Activated T-helper 2 cell treated with anti-CD3 and anti-CD28 coated beads, Interferon-gamma antibody, Interleukin-2, Interleukin-4, amounts not matched to agents 10 μg/mL and 5 μg/mL and 100 μg/mL, durations not matched to agents 14 hours and 24 hours and 36 hours (primary cell): ENCODE measurements at regions of chr3 and their contacts with region 1.

Region 1: GRCh38 chr3:33096093-33096868 is 665 bp downstream of the GLB1 start:
- DNase-seq: peak; percentile 31
- H3K4me3 Mint-ChIP-seq: peak overlapping the region; percentile 98
- H3K27ac Mint-ChIP-seq: peak overlapping the region; percentile 84
- H3K4me1 Mint-ChIP-seq: peaks cover 33% of the 10 kb centered on the region
- H3K27me3 Mint-ChIP-seq: no peaks in the 10 kb centered on the region

Region 2: DNA sequence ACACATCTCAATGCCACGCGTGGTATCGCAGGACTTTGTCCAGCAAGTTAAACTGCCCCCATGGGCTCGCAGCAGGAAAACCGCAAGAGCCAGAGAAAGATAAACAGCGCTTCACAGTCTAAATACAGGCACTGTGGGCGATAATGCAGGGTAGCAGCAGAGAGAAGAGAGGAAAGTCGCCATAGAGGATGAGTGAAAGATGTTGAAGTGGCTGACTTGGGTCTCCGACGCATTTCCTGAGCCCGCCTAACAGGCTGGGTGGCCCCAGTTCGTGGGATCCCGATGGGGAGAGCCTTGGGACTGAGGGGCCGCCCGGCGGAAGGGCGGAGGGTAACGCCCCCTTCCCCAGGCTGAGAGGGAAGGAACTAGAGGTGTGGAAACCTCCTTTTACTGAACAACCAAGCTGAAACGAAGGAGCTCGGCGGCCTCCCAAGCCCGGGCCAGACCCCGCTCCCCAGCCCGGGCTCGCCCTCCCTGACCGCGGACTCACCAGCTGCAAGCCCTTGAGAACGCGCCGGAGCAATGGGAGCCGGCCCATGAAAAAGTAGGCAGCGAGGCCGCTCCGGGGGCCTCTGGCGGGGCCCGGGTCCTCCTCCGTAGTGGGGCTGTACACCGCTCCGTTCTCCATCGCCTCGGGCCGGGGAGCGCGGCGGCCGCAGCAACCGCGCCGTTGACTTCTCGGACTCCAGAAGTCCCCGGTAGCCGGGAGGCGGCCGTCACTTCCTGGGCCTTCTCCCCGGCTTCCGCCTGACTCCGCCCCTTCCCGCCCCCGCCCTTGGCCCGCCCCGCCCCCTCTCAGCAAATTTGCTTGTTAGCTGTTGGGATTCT is 593.9 kb before region 1 on chr3 and contains the start of gene CMTM6:
- intact Hi-C with region 1: loop called (anchors 10 kb)
- DNase-seq: peak; percentile 68
- H3K4me3 Mint-ChIP-seq: peak within 1 kb of the TSS; percentile 94
- H3K27ac Mint-ChIP-seq: peak within 1 kb of the TSS; percentile 85
- H3K4me1 Mint-ChIP-seq: peaks cover 31% of the 10 kb centered on the region
- H3K27me3 Mint-ChIP-seq: peaks cover 4% of the 10 kb centered on the region
- total RNA-seq, gene CMTM6: 107 and 108 TPM in 2 replicates